Upper lobe of right lung (tissue), 1 donor: ENCODE measurements at regions of chr16 and their contacts with region 1.

Region 1: GRCh38 chr16:88743693-88744576 is 37.6 kb downstream of the CTU2 start:
- DNase-seq: peak; percentile 93
- ATAC-seq: peak; percentile 87
- H3K4me3 ChIP-seq: no peak overlapping the region
- H3K27ac ChIP-seq: peak overlapping the region; percentile 11
- H3K4me1 ChIP-seq: peaks cover 27% of the 10 kb centered on the region
- H3K27me3 ChIP-seq: no peaks in the 10 kb centered on the region
- CTCF ChIP-seq: peak; percentile 93

Region 2: DNA sequence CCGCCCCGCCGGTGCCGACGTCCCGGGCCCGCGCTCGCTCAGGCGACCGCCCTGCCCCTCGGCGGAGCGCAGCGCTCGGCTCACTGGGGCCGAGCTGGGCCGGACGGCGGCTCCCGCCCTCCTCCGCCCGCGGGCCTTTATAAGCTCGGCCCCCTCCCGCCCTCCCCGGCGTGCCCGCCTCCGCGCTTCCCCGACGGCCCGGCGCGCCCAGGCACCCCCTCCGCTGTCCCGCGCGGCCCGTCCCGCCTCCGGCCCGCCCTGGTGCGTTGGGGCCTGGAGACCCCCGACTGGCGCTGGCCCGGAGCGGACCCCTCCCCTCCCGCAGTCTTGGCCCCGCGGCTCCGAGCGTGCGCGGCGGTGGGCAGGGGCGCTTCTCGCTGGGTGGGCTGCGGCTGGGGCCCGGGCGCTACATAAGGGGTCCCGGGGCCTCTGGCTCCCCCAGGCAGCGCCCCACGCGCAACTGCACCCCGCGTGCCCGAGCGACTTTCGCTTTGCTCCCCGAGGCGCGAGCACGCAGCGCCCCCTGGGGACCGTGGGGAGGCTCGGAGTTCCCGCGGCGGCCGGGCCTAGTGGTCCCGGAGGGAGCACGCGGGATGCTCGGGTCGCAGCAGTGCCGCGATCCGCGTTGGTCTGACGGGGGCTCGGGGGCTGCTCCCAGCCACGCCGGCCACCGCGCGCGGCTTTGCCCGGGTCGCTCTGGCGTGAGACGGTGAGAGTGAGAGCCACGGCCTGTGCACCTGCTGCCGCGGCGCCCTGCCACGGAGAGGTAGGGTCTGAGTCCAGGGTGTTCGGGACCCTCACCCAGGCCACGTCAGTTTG is 41.4 kb after region 1 on chr16 and contains the start of gene PIEZO1:
- intact Hi-C with region 1: loop called (anchors 5 kb)
- DNase-seq: peak; percentile 92
- ATAC-seq: peak; percentile 77
- H3K4me3 ChIP-seq: peak within 1 kb of the TSS; percentile 54
- H3K27ac ChIP-seq: peak within 1 kb of the TSS; percentile 79
- H3K4me1 ChIP-seq: peaks cover 40% of the 10 kb centered on the region
- H3K27me3 ChIP-seq: no peaks in the 10 kb centered on the region
- CTCF ChIP-seq: peak; percentile 89
- total RNA-seq, gene PIEZO1: 196 TPM